Common myeloid progenitor, CD34-positive (primary cell): ENCODE measurements at regions of chr15 and their contacts with region 1.

Region 1: DNA sequence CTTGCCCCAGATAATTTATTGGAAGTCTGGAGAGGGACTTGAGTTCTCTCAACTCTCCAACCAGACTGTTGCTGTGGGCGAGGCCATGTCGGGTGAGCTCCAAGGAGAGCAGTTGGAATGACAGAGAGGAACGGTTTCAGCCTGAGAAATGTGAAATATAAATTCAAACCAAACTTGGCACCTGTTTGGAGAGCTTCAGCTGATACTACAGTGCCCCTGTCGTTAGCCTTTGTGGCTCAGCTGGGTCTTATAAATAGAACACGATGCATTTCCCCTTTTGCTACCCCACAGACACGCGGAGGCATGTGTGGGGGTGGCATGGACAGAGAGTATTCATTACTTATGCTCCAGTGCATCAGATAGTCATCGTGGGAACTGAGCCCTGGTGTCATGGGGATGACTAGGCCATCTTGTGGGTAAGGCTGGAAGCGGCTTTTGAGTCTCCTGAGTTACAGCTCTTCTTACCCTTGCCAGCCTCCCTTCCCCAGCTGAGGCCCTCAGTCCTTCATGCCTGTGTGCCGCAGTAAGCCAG is 15.6 kb downstream of the SMAD3 start:
- DNase-seq: peak; percentile 96 to 99 (median 99)
- H3K4me3 ChIP-seq: peak overlapping the region in 3 of 7 experiments; percentile 19 to 52 (median 23)
- H3K27ac ChIP-seq: peak overlapping the region in 1 of 2 experiments; percentile 49
- H3K4me1 ChIP-seq: peaks cover 34 to 75% (median 62%) of the 10 kb centered on the region in 4 experiments
- H3K27me3 ChIP-seq: no peaks in the 10 kb centered on the region

Region 2: GRCh38 chr15:67066094-67066958 is 14.6 kb before region 1 on chr15:
- CTCF ChIA-PET with region 1: interaction called, 19 read pairs
- POLR2A ChIA-PET with region 1: interaction called, 6 read pairs
- DNase-seq: peak in 1 of 3 donors; percentile 46
- H3K4me3 ChIP-seq: peak overlapping the region; percentile 79 to 86 (median 80)
- H3K27ac ChIP-seq: peak overlapping the region; percentile 46 to 56
- H3K4me1 ChIP-seq: peaks cover 9 to 47% (median 44%) of the 10 kb centered on the region in 4 experiments
- H3K27me3 ChIP-seq: peaks cover 0 to 5% (median 0%) of the 10 kb centered on the region in 5 experiments

Region 3: GRCh38 chr15:67093504-67093862 is 12.5 kb after region 1 on chr15:
- CTCF ChIA-PET with region 1: interaction called, 21 read pairs
- POLR2A ChIA-PET with region 1: interaction called, 9 read pairs
- DNase-seq: peak; percentile 81 to 96 (median 95)
- H3K4me3 ChIP-seq: peak overlapping the region in 2 of 7 experiments; percentile 8 to 13
- H3K27ac ChIP-seq: peak overlapping the region in 1 of 2 experiments; percentile 67
- H3K4me1 ChIP-seq: peaks cover 19 to 88% (median 70%) of the 10 kb centered on the region in 4 experiments
- H3K27me3 ChIP-seq: no peaks in the 10 kb centered on the region

Region 4: DNA sequence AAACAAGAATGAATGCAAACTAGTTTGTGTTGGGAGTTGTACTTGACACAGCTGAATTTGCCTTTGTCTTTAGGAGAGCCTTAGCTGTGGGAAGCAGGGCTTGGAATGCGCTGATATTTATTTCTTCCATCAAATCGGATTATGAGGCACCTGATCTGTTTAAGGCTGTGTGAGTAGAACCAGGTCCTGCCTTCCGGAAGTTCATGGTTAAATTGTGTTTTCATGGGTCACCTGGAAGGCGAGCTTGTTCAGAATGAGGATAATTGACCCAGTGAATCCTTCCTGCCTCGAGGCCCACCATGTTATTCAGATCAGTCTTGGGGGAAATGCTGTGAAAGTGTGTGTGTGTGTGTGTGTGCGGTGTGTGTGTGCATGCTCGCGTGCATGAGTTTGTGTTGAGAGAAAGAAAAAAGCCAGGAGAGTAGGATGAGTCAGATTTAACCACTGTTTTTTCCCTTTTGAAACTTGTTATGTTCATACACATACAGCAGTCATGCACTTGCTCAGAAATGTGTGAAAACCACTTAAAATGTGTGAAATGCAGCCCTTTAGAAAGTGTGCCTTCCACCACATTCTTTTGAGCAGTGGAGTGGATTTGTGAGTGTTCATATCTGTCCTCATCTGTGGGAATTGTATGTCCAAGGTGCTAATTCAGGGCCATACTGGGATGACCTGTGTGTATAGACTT is 21.1 kb after region 1 on chr15:
- CTCF ChIA-PET with region 1: interaction called, 37 read pairs
- POLR2A ChIA-PET with region 1: interaction called, 5 read pairs
- DNase-seq: peak in 2 of 3 donors; percentile 75 to 82
- H3K4me3 ChIP-seq: peak overlapping the region in 2 of 7 experiments; percentile 5 to 61
- H3K27ac ChIP-seq: peak overlapping the region; percentile 65 to 77
- H3K4me1 ChIP-seq: peaks cover 45 to 99% (median 93%) of the 10 kb centered on the region in 4 experiments
- H3K27me3 ChIP-seq: no peaks in the 10 kb centered on the region

Region 5: GRCh38 chr15:67120839-67121643 is 40.1 kb after region 1 on chr15:
- CTCF ChIA-PET with region 1: interaction called, 16 read pairs
- POLR2A ChIA-PET with region 1: interaction called, 3 read pairs
- DNase-seq: peak; percentile 92 to 99 (median 98)
- H3K4me3 ChIP-seq: peak overlapping the region in 3 of 7 experiments; percentile 28 to 57 (median 41)
- H3K27ac ChIP-seq: peak overlapping the region; percentile 88 to 93
- H3K4me1 ChIP-seq: peaks cover 12 to 77% (median 55%) of the 10 kb centered on the region in 4 experiments
- H3K27me3 ChIP-seq: no peaks in the 10 kb centered on the region